ENCODE measurements at regions of chr19 and their contacts with region 1.

Region 1: GRCh38 chr19:48872182-48872883 is at the start of gene PPP1R15A:
- DNase-seq: peak; percentile 99
- H3K4me3 Mint-ChIP-seq: peak within 1 kb of the TSS; percentile 97
- H3K27ac Mint-ChIP-seq: peak within 1 kb of the TSS; percentile 99
- H3K4me1 Mint-ChIP-seq: peaks cover 42% of the 10 kb centered on the region
- H3K27me3 Mint-ChIP-seq: peaks cover 4% of the 10 kb centered on the region
- total RNA-seq, gene PPP1R15A: 53.1 and 53.7 TPM in 2 replicates

Region 2: DNA sequence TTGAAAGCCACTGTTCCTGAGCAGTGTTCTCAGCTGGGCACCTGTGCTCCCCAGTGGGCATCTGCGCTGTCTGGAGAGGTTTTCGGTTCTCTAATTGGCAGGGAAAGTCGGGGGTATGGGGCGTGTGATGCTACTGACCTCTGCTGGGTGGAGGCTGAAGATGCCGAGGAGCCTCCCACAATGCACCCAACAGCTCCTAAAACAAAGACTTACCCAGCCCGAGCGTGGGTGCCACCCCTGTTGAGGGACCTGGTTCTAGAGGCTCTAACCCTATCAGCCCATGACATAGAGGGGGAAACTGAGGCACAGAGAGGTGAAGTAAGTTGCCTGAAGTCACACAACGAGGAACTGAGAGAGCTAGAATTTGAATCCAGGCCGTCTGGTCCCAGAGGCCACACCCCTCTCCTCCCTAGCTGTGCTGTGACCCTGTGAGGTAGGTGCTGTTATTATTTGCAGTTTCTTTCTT is 263.5 kb before region 1 on chr19:
- intact Hi-C with region 1: no loop called
- DNase-seq: peak; percentile 40
- H3K4me3 Mint-ChIP-seq: no peak overlapping the region
- H3K27ac Mint-ChIP-seq: no peak overlapping the region
- H3K4me1 Mint-ChIP-seq: no peaks in the 10 kb centered on the region
- H3K27me3 Mint-ChIP-seq: no peaks in the 10 kb centered on the region

Region 3: GRCh38 chr19:48637170-48637947 is 235.0 kb before region 1 on chr19 and contains the start of gene DBP:
- intact Hi-C with region 1: loop called (anchors 1 kb)
- DNase-seq: peak; percentile 98
- H3K4me3 Mint-ChIP-seq: peak within 1 kb of the TSS; percentile 97
- H3K27ac Mint-ChIP-seq: peak within 1 kb of the TSS; percentile 100
- H3K4me1 Mint-ChIP-seq: peaks cover 29% of the 10 kb centered on the region
- H3K27me3 Mint-ChIP-seq: peaks cover 4% of the 10 kb centered on the region
- total RNA-seq, gene DBP: 8.5 and 9.1 TPM in 2 replicates

Region 4: GRCh38 chr19:48858984-48859710 is 13.2 kb before region 1 on chr19:
- intact Hi-C with region 1: loop called (anchors 1 kb)
- DNase-seq: peak; percentile 70
- H3K4me3 Mint-ChIP-seq: peak overlapping the region; percentile 91
- H3K27ac Mint-ChIP-seq: peak overlapping the region; percentile 91
- H3K4me1 Mint-ChIP-seq: no peaks in the 10 kb centered on the region
- H3K27me3 Mint-ChIP-seq: no peaks in the 10 kb centered on the region

Region 5: DNA sequence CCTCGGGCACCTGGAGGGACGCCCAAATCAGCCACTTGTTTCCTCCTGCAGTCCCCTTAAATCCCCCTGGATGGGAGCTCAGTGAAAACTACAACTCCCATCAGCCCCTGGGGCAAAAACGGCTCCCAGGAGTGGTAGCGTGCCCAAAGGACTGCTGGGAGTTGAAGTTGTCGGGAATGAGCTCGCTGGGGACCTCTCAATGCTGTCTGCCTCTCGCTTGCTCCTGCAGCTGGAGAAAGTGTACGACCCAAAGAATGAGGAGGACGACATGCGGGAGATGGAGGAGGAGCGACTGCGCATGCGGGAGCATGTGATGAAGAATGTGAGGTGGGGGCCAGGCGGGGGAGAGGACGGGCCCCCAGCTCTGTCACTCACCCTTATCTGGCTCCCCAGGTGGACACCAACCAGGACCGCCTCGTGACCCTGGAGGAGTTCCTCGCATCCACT is 46.5 kb after region 1 on chr19:
- intact Hi-C with region 1: no loop called
- DNase-seq: no peak
- H3K4me3 Mint-ChIP-seq: no peak overlapping the region
- H3K27ac Mint-ChIP-seq: no peak overlapping the region
- H3K4me1 Mint-ChIP-seq: no peaks in the 10 kb centered on the region
- H3K27me3 Mint-ChIP-seq: no peaks in the 10 kb centered on the region

Region 6: DNA sequence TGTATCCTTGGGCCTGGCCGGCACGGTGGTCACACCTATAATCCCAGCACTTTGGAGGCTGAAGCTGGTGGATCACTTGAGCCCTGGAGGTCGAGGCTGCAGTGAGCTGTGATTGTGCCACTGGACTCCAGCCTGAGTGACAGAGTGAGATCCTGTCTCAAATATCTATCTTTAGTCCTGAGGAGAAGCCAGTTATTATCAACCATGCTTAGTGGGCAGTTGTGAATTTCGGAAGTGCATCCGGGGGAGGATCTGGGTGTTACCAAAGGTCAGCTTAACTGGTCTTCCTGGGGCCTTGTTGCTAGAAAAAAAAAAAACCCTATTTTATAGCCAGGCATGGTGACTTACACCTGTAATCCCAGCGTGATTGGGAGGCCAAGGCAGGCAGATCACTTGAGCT is 70.7 kb after region 1 on chr19:
- intact Hi-C with region 1: no loop called
- DNase-seq: no peak
- H3K4me3 Mint-ChIP-seq: no peak overlapping the region
- H3K27ac Mint-ChIP-seq: no peak overlapping the region
- H3K4me1 Mint-ChIP-seq: no peaks in the 10 kb centered on the region
- H3K27me3 Mint-ChIP-seq: peaks cover 2% of the 10 kb centered on the region

Region 7: DNA sequence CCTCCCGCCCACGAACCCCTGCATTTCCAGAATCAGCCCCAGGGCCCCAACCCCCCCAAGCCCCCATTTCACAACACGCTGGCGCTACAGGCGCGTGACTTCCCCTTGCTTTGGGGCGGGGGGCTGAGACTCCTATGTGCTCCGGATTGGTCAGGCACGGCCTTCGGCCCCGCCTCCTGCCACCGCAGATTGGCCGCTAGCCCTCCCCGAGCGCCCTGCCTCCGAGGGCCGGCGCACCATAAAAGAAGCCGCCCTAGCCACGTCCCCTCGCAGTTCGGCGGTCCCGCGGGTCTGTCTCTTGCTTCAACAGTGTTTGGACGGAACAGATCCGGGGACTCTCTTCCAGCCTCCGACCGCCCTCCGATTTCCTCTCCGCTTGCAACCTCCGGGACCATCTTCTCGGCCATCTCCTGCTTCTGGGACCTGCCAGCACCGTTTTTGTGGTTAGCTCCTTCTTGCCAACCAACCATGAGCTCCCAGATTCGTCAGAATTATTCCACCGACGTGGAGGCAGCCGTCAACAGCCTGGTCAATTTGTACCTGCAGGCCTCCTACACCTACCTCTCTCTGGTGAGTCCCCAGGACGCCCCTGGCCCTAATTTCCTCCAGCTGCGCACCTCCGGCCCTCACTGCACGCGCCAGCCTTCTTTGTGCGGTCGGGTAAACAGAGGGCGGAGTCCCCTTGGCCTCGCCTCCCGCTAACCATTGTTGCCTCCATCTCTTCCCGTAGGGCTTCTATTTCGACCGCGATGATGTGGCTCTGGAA is 92.9 kb after region 1 on chr19 and contains the start of gene FTL:
- intact Hi-C with region 1: loop called (anchors 1 kb)
- DNase-seq: peak; percentile 91
- H3K4me3 Mint-ChIP-seq: peak within 1 kb of the TSS; percentile 95
- H3K27ac Mint-ChIP-seq: peak within 1 kb of the TSS; percentile 96
- H3K4me1 Mint-ChIP-seq: peaks cover 58% of the 10 kb centered on the region
- H3K27me3 Mint-ChIP-seq: no peaks in the 10 kb centered on the region
- total RNA-seq, gene FTL: 651 and 662 TPM in 2 replicates

Region 8: GRCh38 chr19:49127674-49128544 is 255.6 kb after region 1 on chr19:
- intact Hi-C with region 1: loop called (anchors 1 kb)
- DNase-seq: peak; percentile 91
- H3K4me3 Mint-ChIP-seq: peak overlapping the region; percentile 88
- H3K27ac Mint-ChIP-seq: peak overlapping the region; percentile 81
- H3K4me1 Mint-ChIP-seq: peaks cover 17% of the 10 kb centered on the region
- H3K27me3 Mint-ChIP-seq: peaks cover 6% of the 10 kb centered on the region

Region 9: DNA sequence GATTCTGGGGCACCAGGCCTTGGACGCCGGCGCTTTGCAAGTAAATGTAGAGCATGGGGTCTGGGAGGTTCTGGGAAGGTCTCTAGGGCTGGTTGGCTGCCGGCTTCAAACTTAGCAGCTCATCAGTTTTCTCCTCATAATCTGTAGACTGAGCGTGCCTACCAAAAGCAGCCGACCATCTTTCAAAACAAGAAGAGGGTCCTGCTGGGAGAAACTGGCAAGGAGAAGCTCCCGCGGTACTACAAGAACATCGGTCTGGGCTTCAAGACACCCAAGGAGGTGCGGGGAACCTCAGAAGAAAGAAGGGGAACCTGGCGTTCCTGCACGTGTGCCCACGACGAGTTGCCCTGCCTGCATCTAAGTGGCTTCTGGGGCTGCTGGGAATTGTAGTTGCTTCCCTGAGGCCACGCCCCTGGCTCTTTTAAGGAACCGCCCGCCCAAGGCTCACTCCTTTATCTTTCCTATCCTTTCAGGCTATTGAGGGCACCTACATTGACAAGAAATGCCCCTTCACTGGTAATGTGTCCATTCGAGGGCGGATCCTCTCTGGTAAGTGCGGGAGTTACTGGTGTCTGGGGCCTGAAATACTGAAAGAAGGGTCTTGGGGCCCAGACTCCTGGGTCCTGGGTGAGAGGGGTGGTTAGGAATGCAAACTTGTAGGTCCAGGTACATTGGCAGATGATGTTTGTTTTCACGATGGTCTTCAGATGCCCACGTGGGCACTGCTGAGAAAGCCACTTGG is 624.9 kb after region 1 on chr19:
- intact Hi-C with region 1: loop called (anchors 5 kb)
- DNase-seq: peak; percentile 65
- H3K4me3 Mint-ChIP-seq: peak overlapping the region; percentile 91
- H3K27ac Mint-ChIP-seq: peak overlapping the region; percentile 94
- H3K4me1 Mint-ChIP-seq: peaks cover 64% of the 10 kb centered on the region
- H3K27me3 Mint-ChIP-seq: no peaks in the 10 kb centered on the region

Measured in activated T-helper 1 cell treated with anti-CD3 and anti-CD28 coated beads, Interleukin-12 subunit alpha, Interleukin-12 subunit beta, Interleukin-2, Interleukin-4 antibody, amounts not matched to agents 30 ng/mL and 10 ng/mL and 1 ng/mL, durations not matched to agents 14 hours and 24 hours and 36 hours (primary cell).